CD8-positive, alpha-beta T cell (primary cell): ENCODE measurements at regions of chr11 and their contacts with region 1.

Region 1: DNA sequence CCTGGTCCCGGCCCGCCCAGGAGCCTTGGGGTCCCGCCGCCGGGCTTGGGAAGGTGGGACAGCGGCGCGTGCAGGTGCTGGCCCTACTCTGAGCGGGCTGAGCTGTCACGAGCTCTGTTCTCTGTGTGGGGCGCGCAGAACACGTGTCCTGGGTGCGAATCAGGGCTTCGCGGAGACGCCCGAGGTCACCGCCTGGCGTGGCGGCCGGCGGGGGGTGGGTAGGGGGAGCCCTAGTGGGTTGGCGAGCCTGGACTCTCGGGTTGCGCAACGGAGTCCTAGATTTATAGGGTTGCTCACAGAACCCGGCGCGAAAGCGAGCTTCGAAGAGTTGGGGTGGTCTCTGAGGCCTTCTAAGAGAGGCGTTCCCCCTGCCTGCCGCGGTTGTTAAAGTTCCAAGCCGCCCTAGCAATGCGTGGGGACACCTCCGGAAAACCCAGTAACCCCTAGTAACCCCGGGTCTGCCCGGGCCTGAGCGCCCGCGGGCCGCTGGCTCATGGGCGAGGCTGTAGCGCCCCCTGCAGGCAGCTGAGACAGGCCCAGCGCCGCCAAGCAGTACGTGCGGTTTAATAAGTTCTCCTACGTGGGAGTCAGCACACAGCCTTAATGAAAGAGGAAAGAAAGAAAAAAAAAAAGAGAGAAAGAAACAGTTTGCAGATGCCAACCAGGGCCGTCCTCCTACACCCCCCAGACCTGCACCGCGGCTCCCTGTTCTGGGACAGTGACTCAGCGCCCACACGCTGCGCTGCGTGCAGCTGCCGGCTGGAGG is 2.8 kb downstream of the ADM start:
- DNase-seq: peak; percentile 67 to 92 (median 81)
- ATAC-seq: peak; percentile 62
- H3K4me3 ChIP-seq: peak overlapping the region; percentile 83 to 91
- H3K4me3 Mint-ChIP-seq: peak overlapping the region; percentile 95
- H3K27ac ChIP-seq: no peak overlapping the region
- H3K27ac Mint-ChIP-seq: no peak overlapping the region
- H3K4me1 ChIP-seq: peaks cover 43% of the 10 kb centered on the region
- H3K4me1 Mint-ChIP-seq: peaks cover 38% of the 10 kb centered on the region
- H3K27me3 ChIP-seq: peaks cover 16 to 30% of the 10 kb centered on the region in 2 experiments
- H3K27me3 Mint-ChIP-seq: peaks cover 40% of the 10 kb centered on the region
- CTCF ChIP-seq: peak; percentile 98

Region 2: DNA sequence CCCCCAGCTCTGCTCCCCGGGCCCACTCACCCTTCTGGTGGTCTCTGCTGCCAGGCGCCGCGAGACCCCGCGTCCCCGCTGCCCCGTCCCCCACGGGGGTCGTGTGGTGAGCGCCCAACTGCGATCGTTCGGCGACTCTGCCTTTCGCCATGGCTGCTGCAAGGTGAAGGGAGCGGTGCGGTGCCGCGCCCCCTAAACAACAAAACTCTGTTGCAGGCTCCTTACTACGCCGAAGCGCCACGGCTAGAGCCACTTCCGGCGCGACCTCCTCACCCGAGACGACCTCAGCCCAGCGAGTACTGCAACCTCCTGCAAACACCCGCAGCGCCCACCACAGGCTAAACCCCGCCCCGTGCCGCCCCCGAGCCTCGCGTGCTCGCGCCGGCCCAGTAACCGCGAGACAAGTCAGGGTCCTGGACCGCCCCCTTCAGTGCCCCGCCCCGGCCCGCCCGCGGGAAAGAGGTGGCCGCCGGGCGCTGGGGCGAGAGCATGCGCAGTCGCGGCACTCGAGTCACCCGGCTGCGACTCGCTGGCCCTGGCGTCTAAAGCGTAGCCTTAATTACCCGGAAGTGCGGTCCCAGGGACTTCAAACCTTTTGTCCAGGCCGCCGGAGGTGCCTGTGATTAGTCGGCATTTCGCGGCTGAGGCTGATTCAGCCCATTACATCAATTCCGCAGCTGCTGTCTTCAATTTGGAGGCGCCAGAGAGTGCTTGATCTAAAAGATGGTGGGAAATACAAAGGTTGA is 993.2 kb before region 1 on chr11 and contains the start of gene TMEM41B:
- CTCF ChIA-PET with region 1: no interaction called
- POLR2A ChIA-PET with region 1: no interaction called
- intact Hi-C with region 1: loop called in 1 of 2 experiments (anchors 5 kb)
- DNase-seq: peak; percentile 98 to 100 (median 100)
- ATAC-seq: peak; percentile 96
- H3K4me3 ChIP-seq: peak within 1 kb of the TSS; percentile 85 to 99
- H3K4me3 Mint-ChIP-seq: peak within 1 kb of the TSS; percentile 98
- H3K27ac ChIP-seq: peak within 1 kb of the TSS; percentile 87 to 97
- H3K27ac Mint-ChIP-seq: peak within 1 kb of the TSS; percentile 98
- H3K4me1 ChIP-seq: peaks cover 29% of the 10 kb centered on the region
- H3K4me1 Mint-ChIP-seq: peaks cover 35% of the 10 kb centered on the region
- H3K27me3 ChIP-seq: no peaks in the 10 kb centered on the region
- H3K27me3 Mint-ChIP-seq: peaks cover 2% of the 10 kb centered on the region
- CTCF ChIP-seq: no peak
- total RNA-seq, gene TMEM41B: 36.8 TPM

Region 3: DNA sequence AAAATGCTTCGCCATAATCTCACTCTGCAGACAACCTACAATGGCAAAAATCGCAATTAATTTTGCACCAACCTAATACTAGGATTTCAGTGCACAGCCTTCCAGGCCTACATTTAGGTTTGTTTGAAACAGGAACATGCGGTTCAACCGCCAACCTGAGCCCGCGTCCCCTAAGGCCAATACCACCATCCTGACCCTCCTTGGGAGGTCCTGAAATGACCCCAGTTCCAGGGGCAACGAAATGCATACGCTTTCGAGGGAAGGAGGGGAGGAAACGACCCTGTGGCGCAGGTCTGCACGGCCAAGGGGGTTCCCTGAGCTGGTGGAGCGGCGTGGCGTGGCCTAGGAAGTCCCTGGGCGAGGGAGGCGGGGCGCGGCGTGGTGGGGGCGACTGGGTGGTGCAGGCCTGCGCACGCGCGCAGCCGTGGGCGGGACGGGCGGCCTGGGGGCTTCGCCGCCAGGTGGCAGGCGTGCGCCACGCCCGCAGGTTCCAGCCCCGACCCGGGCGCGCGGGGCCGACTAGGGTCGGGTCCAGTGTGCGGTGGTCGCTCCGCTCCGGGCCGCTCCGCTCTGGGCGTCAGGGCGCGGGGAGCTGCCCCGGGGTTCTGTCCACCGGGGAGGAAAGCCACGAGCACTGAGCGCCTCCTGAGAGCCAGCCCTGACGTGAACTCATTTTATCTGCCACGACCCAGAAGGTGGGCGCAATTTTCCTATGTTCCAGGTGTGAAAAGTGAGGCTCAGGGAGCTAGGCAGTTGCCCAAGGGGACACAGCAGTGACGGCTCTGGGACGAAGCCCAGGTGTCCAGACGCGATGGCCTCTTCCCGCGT is 549.6 kb before region 1 on chr11:
- CTCF ChIA-PET with region 1: interaction called, 40 read pairs
- POLR2A ChIA-PET with region 1: interaction called, 5 read pairs
- intact Hi-C with region 1: loop called (anchors 1 kb)
- DNase-seq: peak; percentile 80 to 96 (median 92)
- ATAC-seq: peak; percentile 81
- H3K4me3 ChIP-seq: peak overlapping the region; percentile 83 to 91
- H3K4me3 Mint-ChIP-seq: peak overlapping the region; percentile 83
- H3K27ac ChIP-seq: peak overlapping the region; percentile 36 to 42
- H3K27ac Mint-ChIP-seq: peak overlapping the region; percentile 90
- H3K4me1 ChIP-seq: peaks cover 12% of the 10 kb centered on the region
- H3K4me1 Mint-ChIP-seq: peaks cover 24% of the 10 kb centered on the region
- H3K27me3 ChIP-seq: no peaks in the 10 kb centered on the region
- H3K27me3 Mint-ChIP-seq: no peaks in the 10 kb centered on the region
- CTCF ChIP-seq: peak; percentile 84

Region 4: GRCh38 chr11:10255388-10256125 is 52.1 kb before region 1 on chr11:
- CTCF ChIA-PET with region 1: interaction called, 3 read pairs
- POLR2A ChIA-PET with region 1: interaction called, 4 read pairs
- intact Hi-C with region 1: loop called in 1 of 2 experiments (anchors 5 kb)
- DNase-seq: peak in 1 of 9 experiments; percentile 7
- ATAC-seq: no peak
- H3K4me3 ChIP-seq: no peak overlapping the region
- H3K4me3 Mint-ChIP-seq: no peak overlapping the region
- H3K27ac ChIP-seq: no peak overlapping the region
- H3K27ac Mint-ChIP-seq: no peak overlapping the region
- H3K4me1 ChIP-seq: no peaks in the 10 kb centered on the region
- H3K4me1 Mint-ChIP-seq: peaks cover 4% of the 10 kb centered on the region
- H3K27me3 ChIP-seq: no peaks in the 10 kb centered on the region
- H3K27me3 Mint-ChIP-seq: no peaks in the 10 kb centered on the region
- CTCF ChIP-seq: no peak

Region 5: DNA sequence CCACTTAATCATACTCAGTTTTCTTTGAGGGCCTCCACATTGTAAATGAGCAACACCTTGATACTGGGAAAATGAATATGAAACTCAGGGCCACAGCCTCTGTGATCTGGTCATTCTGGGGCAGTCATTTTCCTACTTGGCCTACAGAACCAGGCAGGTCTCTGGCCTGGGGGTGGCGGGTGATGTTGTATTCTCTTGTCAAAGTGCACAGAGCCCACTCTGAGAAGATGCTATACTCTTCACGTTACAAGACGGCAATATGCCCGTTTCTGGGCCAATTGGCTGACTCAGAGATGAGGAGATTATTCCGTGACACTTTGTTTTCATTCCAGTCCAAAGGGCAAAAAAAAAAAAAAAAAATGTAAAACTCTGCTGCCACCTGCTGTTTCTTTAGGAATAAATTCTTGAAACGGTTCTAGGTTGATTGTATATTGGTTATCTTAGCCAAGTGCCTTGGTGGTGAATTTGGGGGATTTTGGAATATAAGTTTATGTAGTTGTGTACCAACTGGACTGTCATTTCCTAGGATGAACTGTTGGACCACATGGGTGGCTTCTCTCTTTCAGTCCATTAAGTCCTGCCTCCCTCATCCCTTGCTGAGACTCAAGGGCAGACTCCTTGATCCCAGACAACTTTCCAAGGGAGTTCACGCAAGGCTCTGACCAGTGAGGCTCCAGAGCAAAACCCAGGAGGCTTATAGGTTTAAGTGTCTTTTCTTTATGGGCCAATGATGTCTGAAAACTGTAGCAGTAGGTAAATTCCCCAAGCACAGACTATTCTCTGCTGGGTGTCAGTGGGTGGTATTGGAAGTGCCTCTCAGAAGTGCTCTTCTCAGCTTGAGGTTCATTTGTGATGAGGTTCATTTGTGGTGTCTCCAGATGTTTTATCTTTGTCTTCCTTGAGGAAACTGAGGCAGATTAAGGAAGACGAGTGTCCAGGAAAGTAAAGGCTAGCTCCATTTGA is 15.5 kb after region 1 on chr11:
- CTCF ChIA-PET with region 1: interaction called, 53 read pairs
- POLR2A ChIA-PET with region 1: no interaction called
- intact Hi-C with region 1: no loop called
- DNase-seq: peak in 5 of 9 experiments; percentile 26 to 67 (median 38)
- ATAC-seq: peak; percentile 82
- H3K4me3 ChIP-seq: no peak overlapping the region
- H3K4me3 Mint-ChIP-seq: no peak overlapping the region
- H3K27ac ChIP-seq: no peak overlapping the region
- H3K27ac Mint-ChIP-seq: no peak overlapping the region
- H3K4me1 ChIP-seq: no peaks in the 10 kb centered on the region
- H3K4me1 Mint-ChIP-seq: peaks cover 3% of the 10 kb centered on the region
- H3K27me3 ChIP-seq: no peaks in the 10 kb centered on the region
- H3K27me3 Mint-ChIP-seq: peaks cover 4% of the 10 kb centered on the region
- CTCF ChIP-seq: peak; percentile 55

Region 6: DNA sequence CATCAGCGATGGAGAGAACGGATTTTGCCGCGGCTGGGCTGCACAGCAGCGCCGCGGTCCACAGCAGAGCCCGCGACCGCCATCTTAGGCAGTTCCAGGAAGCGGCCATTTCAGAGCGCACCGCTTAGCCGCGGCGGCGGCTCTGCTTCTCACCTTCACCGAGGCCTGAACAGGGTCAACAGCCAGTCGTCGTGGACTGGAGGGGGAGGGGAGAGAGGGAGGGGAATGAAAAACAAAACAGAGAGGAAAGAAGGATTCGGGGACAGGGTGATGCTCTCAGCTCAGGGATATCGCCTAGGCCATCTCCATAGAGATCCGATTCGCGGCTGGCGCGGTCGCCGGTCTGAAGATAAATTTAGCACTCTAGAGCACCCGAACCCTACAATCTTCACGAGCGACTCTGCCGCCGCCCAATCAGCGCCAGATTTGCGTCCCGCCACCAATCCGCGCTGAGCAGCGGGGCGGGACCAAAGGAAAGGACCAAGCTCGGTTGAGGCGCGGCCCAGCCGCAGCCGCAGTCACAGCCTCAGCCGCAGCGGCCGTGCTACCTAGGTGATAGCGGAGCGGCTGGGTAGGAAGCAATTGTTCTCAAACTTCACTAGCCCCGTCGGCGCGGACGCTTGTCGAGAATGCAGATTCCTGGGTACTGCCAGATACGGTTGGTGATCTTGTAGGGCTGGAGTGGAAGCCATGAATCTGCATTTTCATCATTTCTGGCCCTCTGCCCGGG is 550.2 kb after region 1 on chr11 and contains the start of gene ZBED5:
- CTCF ChIA-PET with region 1: no interaction called
- POLR2A ChIA-PET with region 1: no interaction called
- intact Hi-C with region 1: loop called in 1 of 2 experiments (anchors 2 kb)
- DNase-seq: peak; percentile 91 to 98 (median 94)
- ATAC-seq: peak; percentile 90
- H3K4me3 ChIP-seq: peak within 1 kb of the TSS; percentile 68 to 93
- H3K4me3 Mint-ChIP-seq: peak within 1 kb of the TSS; percentile 98
- H3K27ac ChIP-seq: peak within 1 kb of the TSS; percentile 91 to 92
- H3K27ac Mint-ChIP-seq: peak within 1 kb of the TSS; percentile 99
- H3K4me1 ChIP-seq: peaks cover 23% of the 10 kb centered on the region
- H3K4me1 Mint-ChIP-seq: peaks cover 51% of the 10 kb centered on the region
- H3K27me3 ChIP-seq: no peaks in the 10 kb centered on the region
- H3K27me3 Mint-ChIP-seq: no peaks in the 10 kb centered on the region
- CTCF ChIP-seq: no peak
- total RNA-seq, gene ZBED5: 57.5 to 59.2 TPM